GM13977 (cell line): ENCODE measurements at regions of chr9 and their contacts with region 1.

Region 1: GRCh38 chr9:21434202-21435014 is 5.8 kb upstream of the IFNA1 start:
- DNase-seq: peak; percentile 6
- CTCF ChIP-seq: peak; percentile 54

Region 2: DNA sequence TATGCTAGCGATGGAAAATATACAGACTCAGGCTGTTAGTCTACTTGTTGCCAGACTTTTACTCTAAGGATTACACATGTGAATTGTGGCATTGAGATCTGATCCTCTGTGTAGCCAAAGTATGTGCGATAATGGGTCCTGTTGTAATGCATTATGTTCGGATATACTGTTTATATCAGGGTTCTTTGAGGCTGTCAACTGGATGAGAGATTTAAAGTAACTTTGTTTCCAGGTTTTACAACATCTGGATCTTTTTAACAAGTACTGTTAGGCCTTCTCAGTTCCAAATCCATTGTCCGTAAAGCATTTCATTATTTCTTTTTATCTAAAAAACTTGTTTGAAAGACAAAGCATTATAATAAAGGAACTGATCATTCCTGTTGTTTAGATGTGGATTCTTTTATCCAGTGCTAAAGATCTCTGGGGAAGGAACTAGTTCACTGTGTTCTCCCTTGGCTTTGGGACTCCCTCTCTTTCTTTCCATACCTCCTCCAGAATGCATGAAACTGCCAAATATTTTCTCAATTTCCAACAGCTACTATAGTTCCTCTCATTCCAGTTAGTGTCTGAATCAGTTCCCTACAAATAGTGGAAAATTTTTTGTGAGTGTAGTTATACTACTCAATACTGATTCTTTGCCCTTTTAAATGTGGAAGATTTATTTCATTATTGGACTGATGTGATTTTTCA is 471.7 kb before region 1 on chr9:
- in situ Hi-C with region 1: no loop called
- DNase-seq: no peak
- CTCF ChIP-seq: no peak

Region 3: DNA sequence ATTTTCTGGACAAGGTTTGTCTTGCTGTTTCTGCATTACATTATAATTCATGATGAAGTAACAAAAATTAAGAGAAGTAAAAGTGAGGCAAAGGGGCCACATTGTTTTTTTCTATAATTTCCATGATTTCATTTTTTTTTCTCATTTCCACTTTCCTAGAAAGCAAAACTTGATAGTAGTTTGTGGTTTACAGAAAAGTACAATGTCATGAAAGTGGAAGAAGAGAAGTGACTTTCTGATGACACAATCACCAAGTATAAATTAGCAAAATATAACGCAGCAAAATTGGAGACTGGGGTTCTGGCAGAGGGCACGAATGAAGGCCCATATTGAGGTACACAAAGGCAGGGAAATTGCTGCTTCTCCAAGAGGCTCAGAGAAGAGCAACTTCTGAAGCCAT is 189.6 kb before region 1 on chr9:
- in situ Hi-C with region 1: loop called (anchors 25 kb)
- DNase-seq: no peak
- CTCF ChIP-seq: no peak